HepG2 (cell line): ENCODE measurements at regions of chr1 and their contacts with region 1.

Region 1: GRCh38 chr1:21659099-21659923 is 9.8 kb downstream of the RAP1GAP start:
- DNase-seq: peak; percentile 58
- ATAC-seq: peak; percentile 81
- H3K4me3 ChIP-seq: peak overlapping the region in 1 of 3 experiments; percentile 61; a peak in 3 of 6 replicates
- H3K27ac ChIP-seq: no peak overlapping the region
- H3K4me1 ChIP-seq: peaks cover 20% of the 10 kb centered on the region
- H3K27me3 ChIP-seq: no peaks in the 10 kb centered on the region
- CTCF ChIP-seq: peak; percentile 95
- EP300 ChIP-seq: no peak
- POLR2A ChIP-seq: no peak
- RAD21 ChIP-seq: peak; percentile 95

Region 2: GRCh38 chr1:21511579-21512522 is 147.5 kb before region 1 on chr1:
- CTCF ChIA-PET with region 1: interaction called, 6 read pairs
- POLR2A ChIA-PET with region 1: no interaction called
- in situ Hi-C with region 1: loop called (anchors 5 kb)
- intact Hi-C with region 1: no loop called
- DNase-seq: no peak
- ATAC-seq: no peak
- H3K4me3 ChIP-seq: no peak overlapping the region
- H3K27ac ChIP-seq: no peak overlapping the region
- H3K4me1 ChIP-seq: peaks cover 23% of the 10 kb centered on the region
- H3K27me3 ChIP-seq: peaks cover 5 to 58% of the 10 kb centered on the region in 2 experiments; a peak in 4 of 5 replicates
- CTCF ChIP-seq: no peak
- EP300 ChIP-seq: no peak
- POLR2A ChIP-seq: no peak
- RAD21 ChIP-seq: no peak

Region 3: GRCh38 chr1:21594935-21595897 is 64.1 kb before region 1 on chr1:
- CTCF ChIA-PET with region 1: no interaction called
- POLR2A ChIA-PET with region 1: no interaction called
- in situ Hi-C with region 1: no loop called
- intact Hi-C with region 1: loop called (anchors 2 kb)
- DNase-seq: peak; percentile 49
- ATAC-seq: peak; percentile 21
- H3K4me3 ChIP-seq: no peak overlapping the region
- H3K27ac ChIP-seq: no peak overlapping the region
- H3K4me1 ChIP-seq: peaks cover 25% of the 10 kb centered on the region
- H3K27me3 ChIP-seq: peaks cover 0 to 12% of the 10 kb centered on the region in 2 experiments; a peak in 3 of 5 replicates
- CTCF ChIP-seq: peak; percentile 79
- EP300 ChIP-seq: no peak
- POLR2A ChIP-seq: no peak; a peak in 1 of 4 replicates
- RAD21 ChIP-seq: peak; percentile 57

Region 4: DNA sequence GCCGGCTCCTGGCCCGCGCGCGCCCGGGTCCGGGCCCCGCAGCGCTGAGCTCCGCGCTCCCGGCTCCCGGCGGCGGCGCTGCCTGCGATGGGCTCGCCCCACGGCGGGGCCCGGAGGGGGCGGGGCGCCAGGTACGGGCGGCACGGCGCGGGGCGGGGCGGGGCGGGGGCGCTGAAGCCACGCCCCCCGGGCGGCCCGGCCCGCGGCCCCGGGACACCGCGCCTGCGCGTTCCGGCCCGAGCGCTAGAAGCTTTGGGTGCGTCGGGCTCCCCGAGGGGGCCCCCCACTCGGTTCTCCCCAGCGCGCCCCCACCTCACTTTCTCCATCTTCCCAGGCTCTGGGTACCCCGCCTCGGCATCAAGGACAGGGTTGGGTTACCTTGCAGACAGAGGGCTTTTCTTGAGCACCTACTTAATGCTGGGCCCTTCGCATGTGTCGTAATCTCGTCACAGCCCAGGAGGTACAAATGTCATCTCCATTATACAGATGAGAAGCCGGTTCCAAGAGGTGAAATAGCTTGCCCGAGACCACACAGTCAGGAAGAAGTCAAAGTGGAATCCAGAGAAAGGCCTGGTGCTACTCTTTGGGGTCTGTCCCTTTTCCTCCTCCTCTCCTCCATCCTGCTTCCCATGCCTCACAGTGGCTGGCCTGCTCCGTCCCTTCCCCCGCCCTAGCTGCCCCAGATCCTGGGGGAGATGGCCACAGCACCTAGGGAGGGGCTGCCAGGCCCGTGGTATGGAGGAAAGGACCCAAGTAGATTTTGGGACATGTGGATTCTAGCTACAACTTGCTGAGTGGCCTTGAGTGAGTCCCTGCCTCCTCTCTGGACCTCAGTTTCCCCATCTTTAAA is 36.6 kb before region 1 on chr1:
- CTCF ChIA-PET with region 1: no interaction called
- POLR2A ChIA-PET with region 1: no interaction called
- in situ Hi-C with region 1: no loop called
- intact Hi-C with region 1: no loop called
- DNase-seq: no peak
- ATAC-seq: no peak
- H3K4me3 ChIP-seq: 0 out of 6 replicates have a peak overlapping the region, but pooled peaks of 1 of the 3 experiments have one; percentile 30
- H3K27ac ChIP-seq: peak overlapping the region; percentile 50
- H3K4me1 ChIP-seq: peaks cover 30% of the 10 kb centered on the region
- H3K27me3 ChIP-seq: no peaks in the 10 kb centered on the region; a peak in 1 of 5 replicates
- CTCF ChIP-seq: no peak
- EP300 ChIP-seq: no peak
- POLR2A ChIP-seq: no peak
- RAD21 ChIP-seq: no peak